Upper lobe of right lung (tissue), 1 donor: ENCODE measurements at regions of chr15 and their contacts with region 1.

Region 1: DNA sequence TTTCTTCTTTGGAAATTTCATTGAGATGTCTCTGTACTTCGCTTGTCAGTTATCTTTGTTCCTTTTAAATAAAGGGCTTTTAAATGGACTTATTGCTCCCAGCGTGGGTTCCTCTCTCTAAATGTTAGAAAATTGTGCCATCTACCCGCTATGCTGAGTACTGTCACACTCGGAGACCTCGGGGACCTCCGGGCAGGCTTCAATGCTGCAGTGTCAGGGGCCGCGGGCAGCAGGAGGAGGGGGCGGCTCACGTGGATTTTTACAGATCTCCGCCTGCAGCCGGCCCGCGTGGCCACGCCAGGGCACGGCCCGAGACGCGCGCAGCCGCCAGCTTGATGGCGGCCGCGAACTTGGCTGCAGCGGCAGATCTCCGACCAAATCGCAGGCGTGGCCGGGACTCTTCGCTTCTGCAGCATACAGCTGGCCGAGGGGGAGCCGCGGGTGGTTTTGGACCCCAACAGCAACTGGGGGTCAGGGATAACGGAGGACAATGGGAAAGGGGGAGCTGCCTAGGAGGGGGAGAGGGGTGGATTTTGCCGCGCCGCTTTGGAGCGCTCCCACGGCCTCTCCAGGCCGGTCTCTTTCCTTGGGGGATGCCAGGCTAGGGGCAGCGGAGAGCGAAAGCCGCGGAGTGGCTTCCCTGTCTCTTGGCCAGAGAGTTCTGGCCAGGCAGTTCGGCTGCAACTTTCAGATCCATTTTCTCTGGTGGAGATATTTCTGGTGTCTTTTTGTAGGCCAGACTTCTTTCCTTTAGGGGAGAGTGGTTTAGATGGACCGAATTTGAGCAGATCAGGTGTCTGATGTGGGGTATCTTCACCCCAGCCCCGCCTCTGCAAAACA is 15.3 kb downstream of the NR2F2 start:
- DNase-seq: peak; percentile 76
- ATAC-seq: peak; percentile 84
- H3K4me3 ChIP-seq: peak overlapping the region; percentile 56
- H3K27ac ChIP-seq: peak overlapping the region; percentile 83
- H3K4me1 ChIP-seq: peaks cover 6% of the 10 kb centered on the region
- H3K27me3 ChIP-seq: peaks cover 20% of the 10 kb centered on the region
- CTCF ChIP-seq: peak; percentile 56

Region 2: GRCh38 chr15:95259513-95259912 is 1086.3 kb before region 1 on chr15:
- intact Hi-C with region 1: loop called (anchors 10 kb)
- DNase-seq: no peak
- ATAC-seq: peak; percentile 86
- H3K4me3 ChIP-seq: no peak overlapping the region
- H3K27ac ChIP-seq: no peak overlapping the region
- H3K4me1 ChIP-seq: peaks cover 8% of the 10 kb centered on the region
- H3K27me3 ChIP-seq: no peaks in the 10 kb centered on the region
- CTCF ChIP-seq: peak; percentile 80

Region 3: DNA sequence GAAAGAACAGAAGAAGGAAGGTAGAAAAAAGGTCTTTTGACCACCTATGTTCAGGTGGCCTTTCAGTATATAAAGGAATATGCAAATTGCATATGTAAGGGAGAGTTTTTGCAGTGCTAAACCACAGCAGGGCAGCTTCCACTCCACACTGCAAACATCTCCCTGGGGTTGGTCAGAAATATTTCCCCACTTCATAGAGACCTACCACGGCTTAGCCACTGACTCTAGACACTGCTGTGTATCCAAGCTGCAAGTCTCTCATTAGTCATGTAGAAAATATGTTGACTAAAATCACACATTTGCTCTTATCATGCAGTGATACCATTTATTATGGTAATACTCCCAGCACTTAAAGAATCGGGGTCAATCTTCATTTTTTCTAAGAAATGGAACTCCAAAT is 230.1 kb before region 1 on chr15:
- intact Hi-C with region 1: no loop called
- DNase-seq: no peak
- ATAC-seq: no peak
- H3K4me3 ChIP-seq: no peak overlapping the region
- H3K27ac ChIP-seq: no peak overlapping the region
- H3K4me1 ChIP-seq: no peaks in the 10 kb centered on the region
- H3K27me3 ChIP-seq: no peaks in the 10 kb centered on the region
- CTCF ChIP-seq: no peak